ENCODE measurements at regions of chr6 and their contacts with region 1.

Region 1: GRCh38 chr6:131960371-131961133 is 9.4 kb upstream of the CCN2 start:
- DNase-seq: no peak
- ATAC-seq: no peak
- H3K4me3 ChIP-seq: no peak overlapping the region
- H3K27ac ChIP-seq: peak overlapping the region; percentile 83
- H3K4me1 ChIP-seq: peaks cover 76% of the 10 kb centered on the region
- H3K27me3 ChIP-seq: no peaks in the 10 kb centered on the region
- CTCF ChIP-seq: peak; percentile 40
- EP300 ChIP-seq: no peak
- POLR2A ChIP-seq: no peak
- RAD21 ChIP-seq: no peak

Region 2: GRCh38 chr6:131937703-131938631 is 22.6 kb before region 1 on chr6:
- CTCF ChIA-PET with region 1: no interaction called
- POLR2A ChIA-PET with region 1: interaction called, 29 read pairs
- in situ Hi-C with region 1: no loop called
- intact Hi-C with region 1: no loop called
- DNase-seq: peak; percentile 100
- ATAC-seq: peak; percentile 98
- H3K4me3 ChIP-seq: peak overlapping the region in 1 of 3 experiments; percentile 7; a peak in 1 of 6 replicates
- H3K27ac ChIP-seq: peak overlapping the region; percentile 56
- H3K4me1 ChIP-seq: peaks cover 46% of the 10 kb centered on the region
- H3K27me3 ChIP-seq: no peaks in the 10 kb centered on the region
- CTCF ChIP-seq: no peak
- EP300 ChIP-seq: peak; percentile 40 to 97; a peak in 3 of 4 replicates
- POLR2A ChIP-seq: no peak
- RAD21 ChIP-seq: no peak

Region 3: GRCh38 chr6:131972741-131973140 is 12.2 kb after region 1 on chr6:
- CTCF ChIA-PET with region 1: no interaction called
- POLR2A ChIA-PET with region 1: interaction called, 53 read pairs
- in situ Hi-C with region 1: no loop called
- intact Hi-C with region 1: loop called (anchors 1 kb)
- DNase-seq: no peak
- ATAC-seq: no peak
- H3K4me3 ChIP-seq: no peak overlapping the region
- H3K27ac ChIP-seq: no peak overlapping the region
- H3K4me1 ChIP-seq: peaks cover 47% of the 10 kb centered on the region
- H3K27me3 ChIP-seq: no peaks in the 10 kb centered on the region
- CTCF ChIP-seq: no peak
- EP300 ChIP-seq: no peak
- POLR2A ChIP-seq: no peak
- RAD21 ChIP-seq: no peak

Region 4: DNA sequence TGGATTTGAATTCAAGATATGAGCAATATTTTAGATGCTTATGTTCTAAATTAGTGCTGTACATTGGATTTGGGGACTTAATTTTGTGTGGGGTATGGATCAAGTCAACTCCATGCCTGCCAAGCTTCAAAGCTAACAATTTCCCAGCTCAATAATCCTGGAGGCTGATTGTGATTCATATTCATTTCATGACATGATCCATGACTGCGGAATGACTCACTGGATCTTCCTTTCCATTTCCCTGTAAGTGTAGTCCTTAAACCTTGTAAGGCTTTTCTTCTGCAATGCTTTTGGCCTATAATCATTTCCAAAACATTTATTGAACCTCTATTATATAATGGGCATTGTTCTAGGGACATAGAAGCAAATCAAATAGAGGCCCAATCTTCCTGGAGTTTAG is 35.4 kb after region 1 on chr6:
- CTCF ChIA-PET with region 1: no interaction called
- POLR2A ChIA-PET with region 1: interaction called, 13 read pairs
- in situ Hi-C with region 1: no loop called
- intact Hi-C with region 1: no loop called
- DNase-seq: no peak
- ATAC-seq: no peak
- H3K4me3 ChIP-seq: no peak overlapping the region
- H3K27ac ChIP-seq: no peak overlapping the region
- H3K4me1 ChIP-seq: peaks cover 25% of the 10 kb centered on the region
- H3K27me3 ChIP-seq: no peaks in the 10 kb centered on the region
- CTCF ChIP-seq: no peak
- EP300 ChIP-seq: no peak
- POLR2A ChIP-seq: no peak
- RAD21 ChIP-seq: no peak

Region 5: GRCh38 chr6:132020138-132020581 is 59.6 kb after region 1 on chr6:
- CTCF ChIA-PET with region 1: no interaction called
- POLR2A ChIA-PET with region 1: interaction called, 20 read pairs
- in situ Hi-C with region 1: no loop called
- intact Hi-C with region 1: loop called (anchors 2 kb)
- DNase-seq: no peak
- ATAC-seq: no peak; the same call in 2 of the 3 replicates
- H3K4me3 ChIP-seq: no peak overlapping the region
- H3K27ac ChIP-seq: peak overlapping the region; percentile 25
- H3K4me1 ChIP-seq: peaks cover 44% of the 10 kb centered on the region
- H3K27me3 ChIP-seq: no peaks in the 10 kb centered on the region
- CTCF ChIP-seq: no peak
- EP300 ChIP-seq: no peak
- POLR2A ChIP-seq: no peak
- RAD21 ChIP-seq: no peak

Measured in HepG2 (cell line).